Activated CD8-positive, alpha-beta T cell treated with anti-CD3 and anti-CD28 coated beads, Interleukin-2, amount 10 ng/mL, durations not matched to agents 7 days and 5 days (primary cell): ENCODE measurements at regions of chr6 and their contacts with region 1.

Region 1: DNA sequence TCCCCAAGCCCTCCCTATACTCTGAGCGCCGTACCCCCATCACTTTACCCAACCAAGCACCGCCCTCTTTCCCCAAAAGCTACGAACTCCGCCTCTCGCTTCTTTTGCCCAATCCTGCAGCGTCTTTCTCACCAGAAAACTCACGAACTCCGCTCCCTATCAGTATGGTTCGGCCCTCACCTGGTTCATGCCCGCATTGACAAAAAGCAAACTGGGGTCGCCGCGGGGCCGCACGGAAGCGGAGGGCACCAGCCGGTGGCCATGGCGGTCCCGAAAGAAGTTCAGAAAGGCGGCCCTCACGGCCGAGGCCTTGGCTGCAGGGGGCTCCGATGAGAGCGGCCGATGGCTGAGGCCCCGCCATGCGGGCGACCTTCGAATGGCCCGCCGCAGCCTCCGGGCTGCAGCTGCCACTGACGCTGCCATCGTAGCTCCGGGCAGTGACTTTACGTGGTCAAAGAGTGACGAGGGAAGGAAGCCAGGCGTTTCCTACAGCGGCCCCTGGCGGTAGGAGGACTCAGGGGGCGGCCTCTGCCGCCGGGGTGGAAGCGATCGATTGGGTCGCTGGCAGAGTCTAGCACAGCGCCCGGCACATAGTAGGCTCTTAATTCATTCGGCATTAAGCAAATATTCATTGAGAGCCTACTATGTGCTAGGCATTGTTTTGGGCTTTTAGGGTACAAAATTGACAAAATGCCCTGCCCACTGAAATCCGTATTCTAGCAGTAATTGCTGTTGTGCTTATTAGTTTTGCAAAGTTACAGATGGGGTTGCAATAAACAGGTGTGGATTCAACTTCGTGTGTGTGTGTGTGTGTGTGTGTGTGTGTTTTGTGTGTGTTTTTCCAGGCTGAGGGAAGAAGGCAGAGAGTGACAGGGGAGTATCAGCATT is at the start of gene AARS2:
- DNase-seq: peak; percentile 94
- ATAC-seq: peak; percentile 93
- H3K4me3 Mint-ChIP-seq: peak within 1 kb of the TSS; percentile 98
- H3K27ac Mint-ChIP-seq: peak within 1 kb of the TSS; percentile 96
- H3K4me1 Mint-ChIP-seq: peaks cover 17% of the 10 kb centered on the region
- H3K27me3 Mint-ChIP-seq: peaks cover 4% of the 10 kb centered on the region
- total RNA-seq, gene AARS2: 19.4 to 20.5 TPM

Region 2: GRCh38 chr6:44297063-44298038 is 15.8 kb before region 1 on chr6:
- CTCF ChIA-PET with region 1: interaction called, 35 read pairs
- POLR2A ChIA-PET with region 1: interaction called, 5 read pairs
- DNase-seq: peak; percentile 56
- ATAC-seq: peak; percentile 84
- H3K4me3 Mint-ChIP-seq: peak overlapping the region; percentile 38
- H3K27ac Mint-ChIP-seq: no peak overlapping the region
- H3K4me1 Mint-ChIP-seq: peaks cover 6% of the 10 kb centered on the region
- H3K27me3 Mint-ChIP-seq: peaks cover 41% of the 10 kb centered on the region